GM10248 (cell line): ENCODE measurements at regions of chr10 and their contacts with region 1.

Region 1: GRCh38 chr10:102583435-102584417 is 60.6 kb upstream of the TRIM8 start:
- DNase-seq: peak; percentile 89
- CTCF ChIP-seq: peak; percentile 85

Region 2: DNA sequence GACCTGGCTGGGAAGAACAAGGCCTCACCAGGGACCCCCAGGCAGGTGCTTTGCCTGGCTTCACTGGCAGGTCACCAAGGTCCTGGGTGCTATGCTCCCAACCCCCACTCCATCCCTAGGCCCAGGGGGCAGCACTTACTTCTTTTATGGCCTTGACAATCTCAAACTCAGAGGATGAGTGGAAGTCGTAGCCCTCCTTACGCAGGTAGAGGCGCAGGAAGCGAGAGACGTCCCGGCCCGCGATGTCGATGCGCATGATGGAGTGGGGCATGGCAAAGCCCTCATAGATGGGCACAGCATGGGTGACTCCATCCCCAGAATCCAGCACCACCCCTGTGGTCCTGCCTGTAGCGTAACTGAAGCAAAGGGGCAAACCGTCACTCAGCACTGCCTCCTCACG is 99.7 kb before region 1 on chr10:
- CTCF ChIA-PET with region 1: interaction called, 23 read pairs
- POLR2A ChIA-PET with region 1: no interaction called
- DNase-seq: peak; percentile 4
- CTCF ChIP-seq: no peak

Region 3: DNA sequence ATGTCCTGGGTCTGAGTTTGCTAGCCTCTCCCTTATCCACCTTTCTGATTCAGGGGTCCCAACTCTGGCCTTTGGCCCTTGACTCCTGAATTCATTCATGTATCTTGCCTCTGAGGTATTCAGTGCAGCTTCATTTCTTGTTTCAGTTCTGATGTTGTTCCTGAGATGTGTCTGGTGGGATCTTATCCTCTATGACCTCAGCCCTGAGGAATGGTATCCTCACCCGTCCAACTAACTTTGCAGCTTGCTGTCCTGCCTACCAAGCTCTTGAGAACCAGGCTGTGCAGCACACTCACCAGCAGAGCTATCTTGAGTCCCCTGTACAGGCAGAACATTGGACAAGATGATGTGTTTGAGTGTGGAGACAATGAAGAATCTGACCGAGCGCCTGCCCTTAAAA is 66.2 kb before region 1 on chr10:
- CTCF ChIA-PET with region 1: interaction called, 174 read pairs
- POLR2A ChIA-PET with region 1: interaction called, 7 read pairs
- DNase-seq: no peak
- CTCF ChIP-seq: no peak

Region 4: DNA sequence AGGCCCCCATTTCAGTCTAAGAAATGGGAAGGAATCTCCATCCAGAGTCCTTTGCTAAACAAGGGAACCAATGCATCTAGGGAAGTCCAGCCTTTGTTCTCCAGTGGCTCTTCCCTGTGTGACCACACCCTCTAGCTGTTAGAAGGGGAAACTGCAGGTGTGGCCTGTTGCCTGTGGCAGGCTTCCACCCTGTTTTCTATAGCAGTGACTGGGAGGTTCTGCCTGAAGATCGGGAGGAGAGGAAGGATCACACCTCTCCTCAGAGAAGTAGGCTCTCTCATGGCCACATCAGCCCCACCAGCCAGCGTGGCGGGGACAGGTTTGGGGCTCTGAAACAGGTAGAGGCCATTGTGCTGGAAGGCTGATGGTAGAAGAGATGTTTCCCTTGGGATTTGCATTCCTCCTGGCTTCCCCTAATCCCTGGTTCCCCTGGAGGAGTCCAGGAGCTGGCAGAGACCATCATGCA is 12.8 kb after region 1 on chr10:
- CTCF ChIA-PET with region 1: interaction called, 47 read pairs
- POLR2A ChIA-PET with region 1: no interaction called
- DNase-seq: peak; percentile 80
- CTCF ChIP-seq: peak; percentile 81

Region 5: DNA sequence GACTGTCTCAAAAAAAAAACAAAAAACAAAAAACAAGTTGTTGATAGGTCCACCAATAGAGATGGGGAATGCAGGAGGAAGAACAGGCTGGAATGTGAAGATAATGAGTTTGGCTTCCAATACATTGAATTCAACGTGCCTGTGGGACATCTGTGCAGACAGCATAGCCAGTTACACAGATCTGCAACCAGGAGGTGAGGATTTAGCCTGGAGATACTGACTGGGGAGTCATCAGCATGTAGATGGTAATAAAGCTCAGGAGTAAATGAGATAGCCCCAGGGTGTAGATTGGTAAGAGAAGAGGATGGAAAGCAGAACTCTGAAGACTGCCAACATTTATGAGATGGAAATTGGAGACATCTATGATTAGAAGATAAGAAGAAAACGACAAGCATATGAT is 55.8 kb after region 1 on chr10:
- CTCF ChIA-PET with region 1: no interaction called
- POLR2A ChIA-PET with region 1: no interaction called
- DNase-seq: no peak
- CTCF ChIP-seq: no peak